GM10248 (cell line): ENCODE measurements at regions of chr18 and their contacts with region 1.

Region 1: DNA sequence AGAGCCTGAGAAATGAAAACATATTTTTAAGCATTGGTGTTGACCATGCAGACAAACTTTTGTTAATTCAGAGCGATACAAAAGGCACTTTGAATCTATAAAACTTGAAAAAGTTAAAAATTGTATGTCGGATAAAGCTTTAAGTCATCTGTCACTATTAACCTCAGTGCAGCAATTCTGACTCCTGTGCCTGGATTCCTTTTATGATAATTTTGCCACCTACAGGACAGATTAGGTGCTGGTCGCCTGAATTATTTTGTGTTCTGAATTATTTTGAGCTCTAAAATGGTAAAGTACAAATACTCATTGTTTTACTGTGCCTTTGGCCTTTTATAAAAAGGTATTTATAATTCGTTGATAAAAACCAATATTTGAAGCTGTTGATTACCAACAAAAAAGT is 19.4 kb upstream of the RNF138 start:
- DNase-seq: peak; percentile 24
- CTCF ChIP-seq: peak; percentile 31

Region 2: GRCh38 chr18:32083781-32084180 is 11.5 kb after region 1 on chr18:
- CTCF ChIA-PET with region 1: interaction called, 12 read pairs
- POLR2A ChIA-PET with region 1: no interaction called
- DNase-seq: no peak
- CTCF ChIP-seq: no peak